Gastrocnemius medialis (tissue), 4 donors: ENCODE measurements at regions of chr1 and their contacts with region 1.

Region 1: DNA sequence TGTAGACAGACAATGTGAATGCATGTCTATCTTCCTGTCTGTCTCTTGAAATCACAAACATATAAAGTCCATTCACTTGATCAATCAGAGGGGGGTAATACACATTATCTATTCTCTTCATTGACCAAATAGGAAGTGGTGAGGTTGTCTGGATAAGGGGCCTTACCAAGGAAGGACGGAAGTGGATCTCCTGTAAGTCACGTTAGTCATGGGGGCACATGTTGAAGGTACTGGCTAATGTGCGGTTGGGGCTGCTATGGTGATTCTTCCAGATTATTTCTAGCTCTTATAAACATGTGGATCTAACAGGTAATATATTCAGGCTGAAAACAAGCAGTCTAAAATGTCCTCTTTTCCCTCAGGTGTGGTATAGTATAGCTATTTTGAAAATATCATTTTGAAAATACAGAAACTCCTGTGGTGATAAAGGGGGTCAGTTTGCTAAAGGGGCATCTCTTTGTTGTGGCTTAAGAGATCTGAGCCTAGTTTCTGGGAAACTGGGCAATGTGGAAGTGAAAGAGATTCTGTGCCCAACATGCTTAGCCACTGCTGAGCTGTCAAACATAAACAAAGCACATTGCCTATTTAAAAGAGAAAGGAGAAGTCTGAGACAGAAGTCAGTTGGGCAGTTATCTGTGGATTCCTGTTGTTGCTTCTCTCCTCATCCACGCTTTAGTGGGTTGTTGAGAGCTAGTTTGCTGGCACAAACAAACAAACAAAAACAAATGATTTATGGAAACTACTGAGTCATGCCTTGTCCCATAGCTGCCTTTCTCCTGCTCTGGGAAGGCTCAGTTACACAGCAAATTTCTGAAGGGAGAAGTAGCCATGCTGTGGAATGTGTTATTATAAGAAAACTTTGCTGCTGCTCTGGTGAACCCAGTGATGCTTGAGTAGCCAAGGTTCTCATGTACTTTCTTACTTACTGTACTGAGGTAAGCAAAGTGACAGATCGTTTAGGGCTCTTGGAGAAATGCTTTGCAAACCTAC is 166.9 kb downstream of the HLX start:
- DNase-seq: no peak
- ATAC-seq: no peak
- H3K4me3 ChIP-seq: no peak overlapping the region
- H3K27ac ChIP-seq: no peak overlapping the region
- H3K4me1 ChIP-seq: no peaks in the 10 kb centered on the region
- H3K27me3 ChIP-seq: no peaks in the 10 kb centered on the region
- CTCF ChIP-seq: no peak
- POLR2A ChIP-seq: no peak

Region 2: DNA sequence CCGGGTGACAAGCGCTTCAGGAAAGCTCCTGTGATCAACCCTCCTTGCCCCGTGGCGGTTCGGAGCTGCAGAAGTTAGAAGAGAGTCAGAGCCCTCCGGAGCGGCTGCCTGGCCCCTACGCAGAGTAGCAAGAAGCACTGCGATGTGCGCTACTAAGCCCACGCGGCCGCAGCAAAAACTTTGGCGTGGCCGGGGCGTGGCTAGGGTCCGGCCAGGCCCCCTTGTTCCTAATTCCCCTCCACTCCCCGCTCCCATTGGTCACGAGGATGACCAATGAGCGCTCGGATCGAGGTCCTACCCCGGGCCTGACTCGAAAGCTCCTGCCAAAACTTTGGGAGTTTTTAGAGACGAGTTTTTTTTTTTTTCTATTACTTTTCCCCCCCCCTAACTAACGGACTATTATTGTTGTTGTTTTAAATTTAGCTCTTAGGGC is 167.0 kb before region 1 on chr1 and contains the start of gene HLX:
- in situ Hi-C with region 1: no loop called
- intact Hi-C with region 1: no loop called
- DNase-seq: peak; percentile 87 to 88
- ATAC-seq: peak; percentile 92
- H3K4me3 ChIP-seq: peak within 1 kb of the TSS; percentile 70 to 96 (median 94)
- H3K27ac ChIP-seq: peak within 1 kb of the TSS; percentile 87 to 94 (median 90)
- H3K4me1 ChIP-seq: peaks cover 8 to 21% of the 10 kb centered on the region in 2 donors
- H3K27me3 ChIP-seq: no peaks in the 10 kb centered on the region
- CTCF ChIP-seq: peak in 1 of 5 experiments; percentile 16
- POLR2A ChIP-seq: peak; percentile 66 to 86
- total RNA-seq, gene HLX: 3.5 to 8.3 (median 6.4) TPM

Region 3: GRCh38 chr1:220926146-220926545 is 120.0 kb before region 1 on chr1:
- in situ Hi-C with region 1: no loop called
- intact Hi-C with region 1: loop called (anchors 10 kb)
- DNase-seq: peak; percentile 5 to 18
- ATAC-seq: peak; percentile 60 to 76
- H3K4me3 ChIP-seq: no peak overlapping the region
- H3K27ac ChIP-seq: peak overlapping the region in 1 of 4 donors; percentile 2
- H3K4me1 ChIP-seq: peaks cover 0 to 9% of the 10 kb centered on the region in 2 donors
- H3K27me3 ChIP-seq: no peaks in the 10 kb centered on the region
- CTCF ChIP-seq: no peak
- POLR2A ChIP-seq: no peak

Region 4: DNA sequence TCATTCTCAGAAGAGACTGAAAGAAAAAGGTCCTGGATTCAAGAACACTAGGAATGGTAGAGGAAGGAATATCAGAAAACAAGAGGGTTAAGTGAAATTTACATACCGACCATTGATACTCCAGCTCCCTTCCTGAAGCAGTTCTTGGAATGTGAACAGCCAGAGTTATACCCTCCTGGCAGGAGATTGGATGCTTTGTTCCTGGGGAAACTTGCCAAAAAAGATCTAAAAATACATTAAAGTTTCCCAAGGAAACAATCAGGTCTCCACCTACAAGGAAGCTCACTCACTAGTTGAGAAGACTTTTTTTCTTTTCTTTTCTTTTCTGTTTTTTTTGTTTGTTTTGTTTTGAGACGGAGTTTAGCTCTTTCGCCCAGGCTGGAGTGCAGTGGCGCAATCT is 75.8 kb before region 1 on chr1:
- in situ Hi-C with region 1: no loop called
- intact Hi-C with region 1: no loop called
- DNase-seq: no peak
- ATAC-seq: no peak
- H3K4me3 ChIP-seq: no peak overlapping the region
- H3K27ac ChIP-seq: no peak overlapping the region
- H3K4me1 ChIP-seq: no peaks in the 10 kb centered on the region
- H3K27me3 ChIP-seq: no peaks in the 10 kb centered on the region
- CTCF ChIP-seq: no peak
- POLR2A ChIP-seq: no peak